HEK293 (cell line): ENCODE measurements at regions of chr17 and their contacts with region 1.

Region 1: GRCh38 chr17:35432176-35433074 is at the start of gene SLFN12:
- H3K4me3 ChIP-seq: peak within 1 kb of the TSS; percentile 49
- H3K27ac ChIP-seq: peak within 1 kb of the TSS; percentile 83
- H3K4me1 ChIP-seq: peaks cover 14% of the 10 kb centered on the region
- CTCF ChIP-seq: no peak

Region 2: GRCh38 chr17:35448214-35448898 is 15.9 kb after region 1 on chr17 and contains the start of gene SLFN13:
- CTCF ChIA-PET with region 1: interaction called, 3 read pairs
- POLR2A ChIA-PET with region 1: interaction called, 12 read pairs
- H3K4me3 ChIP-seq: peak within 1 kb of the TSS; percentile 54
- H3K27ac ChIP-seq: peak within 1 kb of the TSS; percentile 38; the same call in 1 of the 2 replicates
- H3K4me1 ChIP-seq: no peaks in the 10 kb centered on the region
- CTCF ChIP-seq: no peak